Psoas muscle (tissue), 8 donors: ENCODE measurements at regions of chr17 and their contacts with region 1.

Region 1: GRCh38 chr17:9522074-9522473 is 53.5 kb downstream of the STX8 start:
- DNase-seq: no peak
- ATAC-seq: peak; percentile 52 to 88 (median 78)
- H3K4me3 ChIP-seq: no peak overlapping the region
- H3K27ac ChIP-seq: no peak overlapping the region
- H3K4me1 ChIP-seq: no peaks in the 10 kb centered on the region
- H3K27me3 ChIP-seq: no peaks in the 10 kb centered on the region
- CTCF ChIP-seq: peak; percentile 64

Region 2: GRCh38 chr17:8991514-8992285 is 530.4 kb before region 1 on chr17:
- intact Hi-C with region 1: loop called (anchors 2 to 5 kb)
- DNase-seq: peak; percentile 26 to 66
- ATAC-seq: peak; percentile 43 to 74 (median 57)
- H3K4me3 ChIP-seq: no peak overlapping the region
- H3K27ac ChIP-seq: no peak overlapping the region
- H3K4me1 ChIP-seq: no peaks in the 10 kb centered on the region
- H3K27me3 ChIP-seq: peaks cover 0 to 3% (median 0%) of the 10 kb centered on the region in 3 donors
- CTCF ChIP-seq: peak; percentile 60

Region 3: GRCh38 chr17:9324864-9325263 is 197.2 kb before region 1 on chr17:
- intact Hi-C with region 1: loop called (anchors 10 kb)
- DNase-seq: no peak
- ATAC-seq: peak; percentile 70 to 92 (median 85)
- H3K4me3 ChIP-seq: no peak overlapping the region
- H3K27ac ChIP-seq: no peak overlapping the region
- H3K4me1 ChIP-seq: no peaks in the 10 kb centered on the region
- H3K27me3 ChIP-seq: no peaks in the 10 kb centered on the region
- CTCF ChIP-seq: no peak

Region 4: DNA sequence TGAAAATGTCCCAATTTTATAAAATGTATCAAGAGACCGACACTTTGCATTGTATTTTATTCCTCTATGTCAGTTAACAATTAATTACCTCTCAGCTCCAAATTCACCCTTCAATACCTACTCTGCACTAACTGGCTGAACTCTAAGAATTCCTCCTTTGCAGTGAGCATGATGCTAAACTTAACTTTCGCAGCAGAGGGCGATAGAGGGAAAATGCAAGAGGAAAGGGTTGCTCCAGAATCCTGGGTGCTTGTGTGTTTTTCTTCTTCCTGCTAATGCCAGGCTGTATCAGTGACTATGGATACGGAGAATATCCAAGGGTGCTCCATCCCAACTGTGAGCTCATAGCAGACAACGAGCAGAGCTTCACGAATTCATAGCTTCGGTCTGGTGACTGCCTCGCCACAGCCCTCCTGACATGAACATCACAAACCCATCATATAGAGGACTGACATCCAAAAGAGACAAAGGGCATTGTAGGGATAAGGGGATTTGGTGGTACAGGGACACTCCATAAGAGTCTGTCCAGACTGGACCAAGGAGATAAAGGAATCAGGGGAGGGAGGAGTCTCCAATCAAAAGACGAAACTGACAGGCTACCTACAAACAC is 119.4 kb before region 1 on chr17:
- intact Hi-C with region 1: loop called in 1 of 2 experiments (anchors 5 kb)
- DNase-seq: no peak
- ATAC-seq: peak in 2 of 4 donors; percentile 50 to 67
- H3K4me3 ChIP-seq: no peak overlapping the region
- H3K27ac ChIP-seq: no peak overlapping the region
- H3K4me1 ChIP-seq: peaks cover 7% of the 10 kb centered on the region
- H3K27me3 ChIP-seq: no peaks in the 10 kb centered on the region
- CTCF ChIP-seq: peak; percentile 29

Region 5: DNA sequence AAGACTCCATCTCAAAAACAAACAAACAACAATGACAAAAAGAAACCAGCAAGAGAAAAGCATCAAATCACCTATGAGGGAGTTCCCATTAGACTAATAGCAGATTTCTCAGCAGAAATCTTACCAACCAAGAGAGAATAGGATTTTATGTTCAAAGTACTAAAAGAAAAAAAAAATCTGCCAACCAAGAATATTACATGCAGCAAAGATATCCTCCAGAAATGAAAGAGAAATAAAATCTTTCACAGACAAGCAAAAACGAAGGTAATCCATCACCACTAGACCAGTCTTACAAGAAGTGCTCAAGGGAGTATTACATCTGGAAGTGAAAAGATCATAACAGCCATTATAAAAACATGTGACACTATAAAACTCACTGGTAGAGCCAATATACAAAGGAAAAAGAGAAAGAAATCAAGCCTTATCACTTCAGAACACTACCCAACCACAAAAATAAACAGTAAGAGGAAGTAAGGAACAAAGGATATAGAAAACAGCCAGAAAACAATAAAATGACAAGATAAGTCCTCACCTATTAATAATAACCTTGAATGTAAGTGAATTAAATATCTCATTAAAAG is 12.7 kb before region 1 on chr17:
- intact Hi-C with region 1: no loop called
- DNase-seq: no peak
- ATAC-seq: no peak
- H3K4me3 ChIP-seq: no peak overlapping the region
- H3K27ac ChIP-seq: no peak overlapping the region
- H3K4me1 ChIP-seq: no peaks in the 10 kb centered on the region
- H3K27me3 ChIP-seq: no peaks in the 10 kb centered on the region
- CTCF ChIP-seq: no peak